PC-3 (cell line): ENCODE measurements at regions of chr12 and their contacts with region 1.

Region 1: GRCh38 chr12:11486623-11487444 is 91.5 kb upstream of the PRB2 start:
- DNase-seq: peak; percentile 86
- ATAC-seq: peak; percentile 44
- H3K4me3 ChIP-seq: no peak overlapping the region
- H3K27ac ChIP-seq: no peak overlapping the region
- H3K4me1 ChIP-seq: peaks cover 15% of the 10 kb centered on the region
- H3K27me3 ChIP-seq: no peaks in the 10 kb centered on the region
- CTCF ChIP-seq: peak; percentile 96

Region 2: GRCh38 chr12:11228296-11228879 is 258.4 kb before region 1 on chr12:
- CTCF ChIA-PET with region 1: no interaction called
- POLR2A ChIA-PET with region 1: no interaction called
- intact Hi-C with region 1: loop called (anchors 1 kb)
- DNase-seq: peak; percentile 68
- ATAC-seq: peak; percentile 87
- H3K4me3 ChIP-seq: no peak overlapping the region
- H3K27ac ChIP-seq: no peak overlapping the region
- H3K4me1 ChIP-seq: no peaks in the 10 kb centered on the region
- H3K27me3 ChIP-seq: no peaks in the 10 kb centered on the region
- CTCF ChIP-seq: peak; percentile 78

Region 3: DNA sequence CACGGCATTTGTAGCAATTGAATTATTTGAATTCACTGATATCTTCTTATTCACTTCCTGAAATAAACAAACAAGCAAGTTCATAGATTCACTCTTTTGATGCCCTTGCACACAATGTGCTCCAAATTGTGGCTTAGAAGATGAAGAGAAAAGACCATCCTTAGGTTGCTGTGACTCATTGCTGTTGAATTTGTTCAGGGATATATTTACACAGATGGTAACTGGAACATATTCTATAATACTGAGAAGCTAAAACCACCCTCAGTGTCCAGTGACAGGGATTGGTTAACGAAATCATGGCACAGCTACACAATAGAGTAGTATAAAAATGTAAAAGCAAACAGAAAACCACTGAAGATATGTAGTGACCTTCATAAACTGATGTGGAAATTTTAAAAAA is 179.7 kb before region 1 on chr12:
- CTCF ChIA-PET with region 1: no interaction called
- POLR2A ChIA-PET with region 1: no interaction called
- intact Hi-C with region 1: loop called (anchors 5 kb)
- DNase-seq: peak; percentile 63
- ATAC-seq: peak; percentile 93
- H3K4me3 ChIP-seq: no peak overlapping the region
- H3K27ac ChIP-seq: no peak overlapping the region
- H3K4me1 ChIP-seq: peaks cover 15% of the 10 kb centered on the region
- H3K27me3 ChIP-seq: no peaks in the 10 kb centered on the region
- CTCF ChIP-seq: no peak

Region 4: DNA sequence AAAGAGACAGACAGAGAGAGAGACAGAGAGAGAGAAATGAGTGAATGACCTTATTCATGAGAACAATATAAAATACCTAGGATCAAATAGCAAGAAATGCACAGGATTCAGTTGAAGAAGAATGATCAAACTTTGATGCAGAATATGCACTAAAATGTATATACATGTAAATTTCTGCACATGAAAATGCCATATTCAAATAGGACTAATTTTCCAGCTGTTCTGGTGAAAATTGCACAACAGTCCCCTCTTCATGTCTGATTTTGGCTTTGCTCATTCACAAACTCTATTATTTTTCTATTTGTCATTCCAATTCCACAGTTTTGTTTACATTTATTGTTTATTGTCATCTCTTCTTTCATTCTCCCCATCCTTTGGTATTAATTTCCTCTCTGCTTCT is 125.7 kb before region 1 on chr12:
- CTCF ChIA-PET with region 1: no interaction called
- POLR2A ChIA-PET with region 1: no interaction called
- intact Hi-C with region 1: loop called (anchors 10 kb)
- DNase-seq: no peak
- ATAC-seq: no peak
- H3K4me3 ChIP-seq: no peak overlapping the region
- H3K27ac ChIP-seq: peak overlapping the region; percentile 75; the same call in 1 of the 2 replicates
- H3K4me1 ChIP-seq: peaks cover 22% of the 10 kb centered on the region
- H3K27me3 ChIP-seq: no peaks in the 10 kb centered on the region
- CTCF ChIP-seq: no peak